Activated CD8-positive, alpha-beta T cell treated with anti-CD3 and anti-CD28 coated beads, Interleukin-2, amount 10 ng/mL, durations not matched to agents 7 days and 5 days (primary cell): ENCODE measurements at regions of chr5 and their contacts with region 1.

Region 1: DNA sequence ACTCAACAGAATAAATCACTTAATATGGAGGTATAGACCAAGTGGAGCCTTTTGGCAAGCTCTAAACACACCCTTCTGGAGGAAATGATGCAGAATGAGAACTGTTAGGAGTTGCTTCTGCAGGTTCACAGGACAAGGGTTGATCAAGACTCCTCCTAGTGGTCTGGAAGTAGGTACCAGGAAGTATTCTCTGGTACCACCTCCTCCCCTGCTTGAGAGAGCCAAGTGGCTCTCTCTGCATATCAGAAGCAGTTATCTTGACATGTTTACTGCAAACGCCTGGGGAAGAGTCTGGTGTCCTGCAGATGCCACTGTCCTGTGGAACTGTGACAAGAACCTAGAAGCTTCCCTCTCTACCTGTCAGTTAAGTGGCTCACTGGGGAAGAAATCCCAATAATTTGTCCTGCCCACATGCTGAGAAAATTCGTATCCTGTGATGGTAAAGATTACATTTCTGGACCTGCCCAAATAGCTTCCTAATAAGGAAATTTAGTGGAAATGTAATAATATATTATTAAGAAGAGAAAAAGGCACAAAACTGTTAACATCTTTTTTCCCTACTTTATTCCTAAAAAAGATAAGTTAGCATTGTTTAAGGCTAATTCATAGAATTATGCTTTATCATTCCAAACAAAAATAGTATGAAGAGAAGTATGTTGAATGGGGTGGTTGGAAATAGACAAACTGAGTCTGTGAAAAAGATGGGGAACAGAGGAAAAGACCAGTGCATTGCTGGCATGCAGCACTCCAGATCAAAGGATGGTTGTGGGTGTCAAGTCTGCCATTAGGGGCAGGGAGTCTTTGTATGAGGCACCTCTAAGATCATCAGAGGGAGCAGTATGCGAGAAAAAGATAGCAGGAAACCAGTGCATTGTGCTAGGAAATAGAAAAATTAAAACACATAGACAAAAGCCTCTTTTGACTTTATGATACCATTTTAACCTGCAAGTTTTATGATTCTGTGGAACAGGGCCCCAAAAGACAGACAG is 118.8 kb downstream of the CDC42SE2 start:
- DNase-seq: peak; percentile 72
- ATAC-seq: peak; percentile 77
- H3K4me3 Mint-ChIP-seq: peak overlapping the region; percentile 32
- H3K27ac Mint-ChIP-seq: peak overlapping the region; percentile 81
- H3K4me1 Mint-ChIP-seq: peaks cover 68% of the 10 kb centered on the region
- H3K27me3 Mint-ChIP-seq: no peaks in the 10 kb centered on the region

Region 2: DNA sequence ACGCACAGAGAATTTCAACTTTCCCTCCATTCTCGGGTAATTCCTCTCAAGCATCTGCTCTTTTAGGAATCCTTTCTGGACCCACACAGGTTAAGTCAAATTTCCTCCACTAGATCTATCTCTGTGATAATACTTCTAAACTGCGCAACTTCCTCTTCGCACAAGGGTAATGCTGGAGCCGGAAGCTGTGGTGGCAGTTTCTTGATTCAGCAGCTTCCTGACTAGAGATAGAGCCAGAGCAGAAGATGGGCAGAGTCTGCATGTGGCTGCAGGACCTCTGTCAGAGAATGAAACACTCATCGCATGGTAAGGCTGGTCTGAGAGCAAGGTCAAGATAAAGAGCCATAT is 129.9 kb before region 1 on chr5:
- CTCF ChIA-PET with region 1: interaction called, 9 read pairs
- POLR2A ChIA-PET with region 1: interaction called, 10 read pairs
- DNase-seq: peak; percentile 91
- ATAC-seq: peak; percentile 84
- H3K4me3 Mint-ChIP-seq: peak overlapping the region; percentile 92
- H3K27ac Mint-ChIP-seq: peak overlapping the region; percentile 93
- H3K4me1 Mint-ChIP-seq: peaks cover 77% of the 10 kb centered on the region
- H3K27me3 Mint-ChIP-seq: no peaks in the 10 kb centered on the region

Region 3: GRCh38 chr5:131281133-131281867 is 101.4 kb before region 1 on chr5:
- CTCF ChIA-PET with region 1: interaction called, 33 read pairs
- POLR2A ChIA-PET with region 1: interaction called, 12 read pairs
- DNase-seq: no peak
- ATAC-seq: peak; percentile 79
- H3K4me3 Mint-ChIP-seq: peak overlapping the region; percentile 78
- H3K27ac Mint-ChIP-seq: peak overlapping the region; percentile 85
- H3K4me1 Mint-ChIP-seq: peaks cover 86% of the 10 kb centered on the region
- H3K27me3 Mint-ChIP-seq: no peaks in the 10 kb centered on the region

Region 4: GRCh38 chr5:131357739-131358561 is 24.8 kb before region 1 on chr5:
- CTCF ChIA-PET with region 1: interaction called, 32 read pairs
- POLR2A ChIA-PET with region 1: interaction called, 4 read pairs
- DNase-seq: no peak
- ATAC-seq: peak; percentile 71
- H3K4me3 Mint-ChIP-seq: no peak overlapping the region
- H3K27ac Mint-ChIP-seq: peak overlapping the region; percentile 55
- H3K4me1 Mint-ChIP-seq: peaks cover 50% of the 10 kb centered on the region
- H3K27me3 Mint-ChIP-seq: no peaks in the 10 kb centered on the region

Region 5: GRCh38 chr5:131394128-131394527 is 11.4 kb after region 1 on chr5:
- CTCF ChIA-PET with region 1: interaction called, 19 read pairs
- POLR2A ChIA-PET with region 1: interaction called, 10 read pairs
- DNase-seq: peak; percentile 61
- ATAC-seq: peak; percentile 86
- H3K4me3 Mint-ChIP-seq: peak overlapping the region; percentile 61
- H3K27ac Mint-ChIP-seq: peak overlapping the region; percentile 87
- H3K4me1 Mint-ChIP-seq: peaks cover 67% of the 10 kb centered on the region
- H3K27me3 Mint-ChIP-seq: no peaks in the 10 kb centered on the region